Posterior vena cava (tissue), 2 donors: ENCODE measurements at regions of chr6 and their contacts with region 1.

Region 1: DNA sequence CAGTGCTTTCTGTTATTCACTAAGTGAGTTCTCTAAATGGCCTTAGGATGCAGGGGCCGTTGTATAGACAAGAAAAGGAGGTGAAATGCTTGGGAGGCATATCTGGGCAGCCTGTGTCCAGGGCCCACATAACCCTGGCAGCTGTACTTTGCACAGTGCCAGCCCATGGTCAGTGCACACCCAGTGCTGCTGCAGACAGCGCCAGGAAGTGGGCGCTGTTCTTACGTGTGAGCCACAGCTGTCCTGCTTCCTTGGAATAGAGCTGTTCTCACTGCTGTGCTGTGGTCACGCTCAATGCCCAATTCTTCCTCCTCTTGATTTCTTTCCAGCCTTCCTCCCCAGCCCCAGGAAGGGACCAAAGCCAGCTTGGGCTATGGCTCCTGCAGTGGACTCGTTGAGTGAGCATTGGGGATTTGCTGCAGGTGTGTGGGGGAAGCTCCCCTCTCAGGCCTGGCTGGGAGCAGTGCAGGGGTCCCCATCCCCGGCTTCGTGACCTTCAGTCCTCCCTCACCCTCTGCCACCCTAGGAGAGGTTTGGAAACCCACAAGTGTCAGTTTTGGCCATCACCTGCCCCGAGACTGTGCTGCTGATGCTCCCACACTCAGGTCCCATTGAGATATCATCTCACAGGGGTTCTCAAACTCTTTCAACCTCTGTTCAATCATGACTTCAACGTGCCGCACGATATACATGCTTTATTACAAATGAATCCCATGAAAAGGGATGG is 246.8 kb upstream of the EXOC2 start:
- DNase-seq: no peak

Region 2: GRCh38 chr6:894274-894673 is 45.4 kb before region 1 on chr6:
- intact Hi-C with region 1: loop called in 1 of 2 experiments (anchors 1 kb)
- DNase-seq: no peak